Lower leg skin (tissue), 4 donors: ENCODE measurements at regions of chr11 and their contacts with region 1.

Region 1: GRCh38 chr11:59207988-59208451 is 4.7 kb downstream of the MPEG1 start:
- DNase-seq: no peak
- H3K4me3 ChIP-seq: no peak overlapping the region
- CTCF ChIP-seq: peak in 1 of 3 donors; percentile 70
- POLR2A ChIP-seq: no peak

Region 2: GRCh38 chr11:59142530-59143507 is 65.2 kb before region 1 on chr11 and contains the start of gene FAM111A:
- intact Hi-C with region 1: no loop called
- DNase-seq: peak; percentile 89 to 98
- H3K4me3 ChIP-seq: peak within 1 kb of the TSS; percentile 71
- CTCF ChIP-seq: no peak
- POLR2A ChIP-seq: no peak
- total RNA-seq, gene FAM111A: 14.9 to 25.0 (median 20.9) TPM

Region 3: GRCh38 chr11:59171508-59172322 is 36.3 kb before region 1 on chr11 and contains the start of gene DTX4:
- intact Hi-C with region 1: loop called (anchors 2 kb)
- DNase-seq: peak; percentile 91 to 98
- H3K4me3 ChIP-seq: peak within 1 kb of the TSS; percentile 28
- CTCF ChIP-seq: peak in 1 of 3 donors; percentile 67
- POLR2A ChIP-seq: no peak
- total RNA-seq, gene DTX4: 1.2 to 6.4 (median 3.4) TPM

Region 4: DNA sequence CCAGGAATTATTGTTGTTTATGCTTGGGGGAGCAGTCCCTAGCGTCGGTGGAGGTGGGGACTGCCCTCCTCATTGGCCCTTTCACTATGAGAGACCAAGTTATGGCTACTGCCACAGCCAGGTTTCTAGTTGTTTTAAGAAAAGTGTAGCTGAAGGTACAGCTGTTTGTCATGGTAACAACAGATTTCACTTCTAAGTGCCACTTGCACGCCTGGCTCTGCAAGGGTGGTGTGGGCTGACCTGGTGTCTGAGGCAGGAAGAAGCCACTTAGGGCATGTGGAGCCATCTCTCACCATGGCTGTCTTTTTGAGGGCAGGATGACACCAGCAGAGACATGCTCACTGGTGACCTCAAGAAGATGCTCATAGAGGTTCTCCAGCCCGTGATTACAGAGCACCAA is 51.0 kb after region 1 on chr11:
- intact Hi-C with region 1: no loop called
- DNase-seq: no peak
- H3K4me3 ChIP-seq: no peak overlapping the region
- CTCF ChIP-seq: no peak
- POLR2A ChIP-seq: no peak